ENCODE measurements at regions of chr17 and their contacts with region 1.

Region 1: DNA sequence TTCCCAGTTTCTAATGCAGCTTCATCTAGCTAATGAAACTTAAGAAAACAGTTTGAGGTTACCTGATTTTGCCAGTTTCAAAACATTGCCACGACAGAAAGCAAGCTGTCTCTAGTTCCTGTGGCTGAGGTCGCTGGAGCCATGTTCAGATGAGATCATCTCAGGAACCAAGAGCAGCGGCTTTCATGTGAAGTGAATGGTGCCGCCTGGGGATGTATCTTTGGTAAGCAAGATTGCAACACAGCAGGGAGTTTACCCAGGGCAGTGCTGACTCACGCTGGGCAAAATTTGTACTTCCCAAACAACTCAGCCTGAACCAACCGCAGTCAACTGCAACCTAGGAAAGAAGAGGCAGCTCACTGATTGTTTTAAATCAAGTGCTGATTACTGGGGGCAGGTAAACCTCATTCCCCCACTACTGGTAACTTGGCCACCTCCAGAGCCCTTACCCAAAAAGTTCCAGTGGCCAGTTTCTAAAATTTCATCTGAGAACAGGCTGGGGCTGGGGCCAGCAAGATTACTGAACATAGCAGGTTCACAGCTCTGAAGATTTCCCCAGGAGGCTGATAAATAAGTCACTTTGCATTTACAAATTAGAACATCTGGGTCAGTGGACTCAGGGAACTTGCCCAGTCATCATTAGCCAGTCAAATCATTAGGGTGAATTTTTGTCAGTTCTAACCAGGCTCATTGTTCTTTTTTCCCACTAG is at the start of gene RFFL:
- DNase-seq: peak; percentile 45 to 92 (median 80)
- ATAC-seq: peak; percentile 99
- H3K4me3 ChIP-seq: peak within 1 kb of the TSS; percentile 8
- H3K4me3 Mint-ChIP-seq: peak within 1 kb of the TSS; percentile 71 to 89 (median 80)
- H3K27ac ChIP-seq: peak within 1 kb of the TSS; percentile 71
- H3K27ac Mint-ChIP-seq: peak within 1 kb of the TSS; percentile 88 to 97 (median 94)
- H3K4me1 ChIP-seq: peaks cover 21 to 29% of the 10 kb centered on the region in 2 donors
- H3K4me1 Mint-ChIP-seq: peaks cover 37 to 80% (median 65%) of the 10 kb centered on the region in 7 donors
- H3K27me3 ChIP-seq: no peaks in the 10 kb centered on the region
- H3K27me3 Mint-ChIP-seq: no peaks in the 10 kb centered on the region
- total RNA-seq, gene RFFL: 45.0 to 74.7 (median 55.7) TPM

Region 2: GRCh38 chr17:34961093-34961911 is 102.4 kb before region 1 on chr17 and contains the starts of genes CCT6B and ZNF830:
- CTCF ChIA-PET with region 1: no interaction called
- POLR2A ChIA-PET with region 1: interaction called, 6 read pairs
- intact Hi-C with region 1: loop called in 1 of 2 experiments (anchors 1 kb)
- DNase-seq: peak; percentile 69 to 94 (median 91)
- ATAC-seq: peak; percentile 95
- H3K4me3 ChIP-seq: peak within 1 kb of the TSS; percentile 94
- H3K4me3 Mint-ChIP-seq: peak within 1 kb of the TSS; percentile 97 to 100 (median 99)
- H3K27ac ChIP-seq: peak within 1 kb of the TSS; percentile 92
- H3K27ac Mint-ChIP-seq: peak within 1 kb of the TSS; percentile 98 to 100 (median 99)
- H3K4me1 ChIP-seq: peaks cover 14 to 16% of the 10 kb centered on the region in 2 donors
- H3K4me1 Mint-ChIP-seq: peaks cover 19 to 38% (median 33%) of the 10 kb centered on the region in 7 donors
- H3K27me3 ChIP-seq: no peaks in the 10 kb centered on the region
- H3K27me3 Mint-ChIP-seq: peaks cover 0 to 10% (median 5%) of the 10 kb centered on the region in 5 donors
- total RNA-seq, gene CCT6B: 1.6 to 3.8 (median 2.4) TPM
- total RNA-seq, gene ZNF830: 26.9 to 47.3 (median 44.9) TPM

Region 3: GRCh38 chr17:34990921-34991365 is 72.7 kb before region 1 on chr17:
- CTCF ChIA-PET with region 1: interaction called, 58 read pairs
- POLR2A ChIA-PET with region 1: interaction called, 4 read pairs
- intact Hi-C with region 1: no loop called
- DNase-seq: no peak
- ATAC-seq: peak; percentile 10
- H3K4me3 ChIP-seq: no peak overlapping the region
- H3K4me3 Mint-ChIP-seq: no peak overlapping the region
- H3K27ac ChIP-seq: no peak overlapping the region
- H3K27ac Mint-ChIP-seq: peak overlapping the region in 1 of 9 donors; percentile 5
- H3K4me1 ChIP-seq: no peaks in the 10 kb centered on the region
- H3K4me1 Mint-ChIP-seq: peaks cover 0 to 17% (median 13%) of the 10 kb centered on the region in 7 donors
- H3K27me3 ChIP-seq: no peaks in the 10 kb centered on the region
- H3K27me3 Mint-ChIP-seq: no peaks in the 10 kb centered on the region

Region 4: GRCh38 chr17:35022536-35023063 is 41.1 kb before region 1 on chr17:
- CTCF ChIA-PET with region 1: interaction called, 32 read pairs
- POLR2A ChIA-PET with region 1: interaction called, 45 read pairs
- intact Hi-C with region 1: loop called (anchors 1 kb)
- DNase-seq: peak; percentile 37 to 65 (median 56)
- ATAC-seq: peak; percentile 99
- H3K4me3 ChIP-seq: peak overlapping the region; percentile 18
- H3K4me3 Mint-ChIP-seq: peak overlapping the region; percentile 10 to 84 (median 70)
- H3K27ac ChIP-seq: peak overlapping the region; percentile 74
- H3K27ac Mint-ChIP-seq: peak overlapping the region; percentile 92 to 97 (median 96)
- H3K4me1 ChIP-seq: peaks cover 28 to 36% of the 10 kb centered on the region in 2 donors
- H3K4me1 Mint-ChIP-seq: peaks cover 27 to 79% (median 60%) of the 10 kb centered on the region in 7 donors
- H3K27me3 ChIP-seq: no peaks in the 10 kb centered on the region
- H3K27me3 Mint-ChIP-seq: no peaks in the 10 kb centered on the region

Region 5: DNA sequence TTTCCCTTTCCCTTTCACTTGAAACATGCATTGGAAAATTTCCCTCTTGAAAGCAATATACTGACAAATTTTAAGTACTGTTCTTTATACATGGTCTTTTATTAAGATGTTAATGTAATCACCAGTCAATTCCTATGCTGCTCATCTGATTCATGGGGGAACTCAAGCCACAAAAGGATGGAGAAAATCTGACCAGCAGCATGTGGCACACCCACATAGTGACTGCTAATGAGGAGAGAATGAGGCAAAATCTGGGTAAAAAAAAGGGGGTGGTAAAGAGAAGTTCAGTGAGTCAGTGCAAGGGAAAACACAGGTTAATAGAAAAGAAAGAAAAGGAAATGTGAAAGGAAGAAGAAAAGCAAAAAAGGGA is 11.4 kb before region 1 on chr17:
- CTCF ChIA-PET with region 1: interaction called, 19 read pairs
- POLR2A ChIA-PET with region 1: interaction called, 132 read pairs
- intact Hi-C with region 1: loop called (anchors 1 kb)
- DNase-seq: no peak
- ATAC-seq: no peak
- H3K4me3 ChIP-seq: peak overlapping the region; percentile 21
- H3K4me3 Mint-ChIP-seq: peak overlapping the region; percentile 6 to 82 (median 74)
- H3K27ac ChIP-seq: peak overlapping the region; percentile 68
- H3K27ac Mint-ChIP-seq: peak overlapping the region; percentile 83 to 99 (median 94)
- H3K4me1 ChIP-seq: peaks cover 60 to 68% of the 10 kb centered on the region in 2 donors
- H3K4me1 Mint-ChIP-seq: peaks cover 59 to 84% (median 73%) of the 10 kb centered on the region in 7 donors
- H3K27me3 ChIP-seq: no peaks in the 10 kb centered on the region
- H3K27me3 Mint-ChIP-seq: no peaks in the 10 kb centered on the region

Region 6: DNA sequence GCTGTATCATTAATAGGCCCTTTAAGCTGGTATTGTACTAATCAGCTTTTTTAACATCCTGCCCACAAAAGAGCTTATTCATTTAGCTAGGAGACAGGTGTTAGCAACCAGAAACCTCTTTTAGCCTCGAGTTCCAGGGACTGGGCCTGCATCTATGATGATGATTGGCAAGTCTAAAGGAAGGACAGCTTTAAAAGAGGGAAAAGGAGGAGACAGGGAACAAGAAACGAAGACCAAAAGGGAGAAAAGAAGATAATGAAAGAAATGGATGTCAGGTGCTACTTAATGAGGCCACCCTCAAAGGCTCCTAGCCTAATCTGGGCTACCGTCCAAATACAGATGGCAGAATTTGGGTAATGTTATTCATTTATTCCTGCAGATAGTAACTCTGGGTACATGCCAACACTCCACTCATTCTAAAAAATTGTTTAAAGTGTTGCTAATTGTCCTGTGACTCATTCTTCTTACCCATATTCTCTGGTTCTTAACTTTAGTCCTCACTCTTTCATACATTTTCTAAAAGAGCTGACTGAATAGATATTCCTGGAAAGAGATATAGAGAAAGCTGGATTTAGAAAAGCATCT is 18.5 kb after region 1 on chr17:
- CTCF ChIA-PET with region 1: interaction called, 9 read pairs
- POLR2A ChIA-PET with region 1: interaction called, 13 read pairs
- intact Hi-C with region 1: loop called in 1 of 2 experiments (anchors 1 kb)
- DNase-seq: no peak
- ATAC-seq: peak; percentile 32
- H3K4me3 ChIP-seq: no peak overlapping the region
- H3K4me3 Mint-ChIP-seq: peak overlapping the region; percentile 14 to 87 (median 70)
- H3K27ac ChIP-seq: peak overlapping the region; percentile 51
- H3K27ac Mint-ChIP-seq: peak overlapping the region; percentile 57 to 96 (median 83)
- H3K4me1 ChIP-seq: peaks cover 44 to 53% of the 10 kb centered on the region in 2 donors
- H3K4me1 Mint-ChIP-seq: peaks cover 41 to 87% (median 80%) of the 10 kb centered on the region in 7 donors
- H3K27me3 ChIP-seq: no peaks in the 10 kb centered on the region
- H3K27me3 Mint-ChIP-seq: no peaks in the 10 kb centered on the region

Region 7: GRCh38 chr17:35627417-35627816 is 563.7 kb after region 1 on chr17:
- CTCF ChIA-PET with region 1: no interaction called
- POLR2A ChIA-PET with region 1: no interaction called
- intact Hi-C with region 1: no loop called
- DNase-seq: no peak
- ATAC-seq: no peak
- H3K4me3 ChIP-seq: no peak overlapping the region
- H3K4me3 Mint-ChIP-seq: no peak overlapping the region
- H3K27ac ChIP-seq: no peak overlapping the region
- H3K27ac Mint-ChIP-seq: no peak overlapping the region
- H3K4me1 ChIP-seq: no peaks in the 10 kb centered on the region
- H3K4me1 Mint-ChIP-seq: peaks cover 0 to 3% (median 0%) of the 10 kb centered on the region in 7 donors
- H3K27me3 ChIP-seq: no peaks in the 10 kb centered on the region
- H3K27me3 Mint-ChIP-seq: no peaks in the 10 kb centered on the region